WTC11 (cell line): ENCODE measurements at regions of chr17 and their contacts with region 1.

Region 1: DNA sequence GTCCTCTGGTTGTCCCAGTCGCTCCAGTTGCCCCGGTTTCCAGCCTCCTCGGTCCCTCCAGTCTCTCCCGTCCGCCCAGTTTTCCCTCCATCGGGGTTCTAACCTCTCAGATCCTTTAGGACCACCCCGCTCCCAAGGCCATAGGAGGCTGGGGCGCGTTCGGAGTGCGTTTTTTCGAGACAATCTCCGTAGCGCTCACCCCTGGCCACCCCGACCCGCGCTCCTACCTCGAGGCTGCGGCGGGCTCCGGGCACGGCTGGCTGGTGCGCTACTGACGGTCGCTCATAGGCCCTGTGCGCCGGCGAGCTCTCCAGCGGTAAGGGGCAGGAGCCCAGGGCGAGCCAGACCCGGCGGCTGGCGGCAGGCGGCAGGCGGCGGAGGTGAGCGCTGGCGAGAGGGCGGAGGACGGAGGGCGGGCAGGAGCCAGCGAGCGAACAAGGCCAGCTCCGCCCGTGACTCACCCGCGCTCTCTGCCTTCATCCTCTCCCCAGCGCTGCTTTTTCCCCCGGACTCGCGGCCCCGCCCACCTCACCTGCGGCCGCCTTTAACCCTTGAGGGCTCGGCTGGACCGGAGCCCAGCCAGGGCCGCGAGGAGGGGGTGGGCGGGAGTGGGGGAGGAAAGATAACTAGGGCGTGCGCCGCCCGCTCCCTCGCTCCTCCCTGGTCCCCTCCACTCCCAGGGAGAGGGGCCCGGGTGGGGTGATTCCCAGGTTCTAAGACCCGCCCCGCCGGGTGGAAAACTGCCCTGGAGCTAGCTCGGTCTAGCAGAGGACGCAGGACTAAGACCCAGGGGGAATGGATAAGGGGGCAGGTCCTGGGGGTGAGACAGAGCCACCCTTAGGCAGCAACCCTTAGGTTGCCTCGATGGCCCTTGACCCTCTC is at the start of gene SP6:
- DNase-seq: peak; percentile 90
- ATAC-seq: peak; percentile 67
- H3K4me3 Mint-ChIP-seq: peak within 1 kb of the TSS; percentile 78
- H3K27ac Mint-ChIP-seq: no peak within 1 kb of the TSS
- H3K4me1 Mint-ChIP-seq: peaks cover 46% of the 10 kb centered on the region
- H3K27me3 Mint-ChIP-seq: peaks cover 92% of the 10 kb centered on the region
- CTCF ChIP-seq: no peak
- total RNA-seq, gene SP6: 2.0 to 3.3 TPM (median 2.3 TPM) in 3 replicates

Region 2: DNA sequence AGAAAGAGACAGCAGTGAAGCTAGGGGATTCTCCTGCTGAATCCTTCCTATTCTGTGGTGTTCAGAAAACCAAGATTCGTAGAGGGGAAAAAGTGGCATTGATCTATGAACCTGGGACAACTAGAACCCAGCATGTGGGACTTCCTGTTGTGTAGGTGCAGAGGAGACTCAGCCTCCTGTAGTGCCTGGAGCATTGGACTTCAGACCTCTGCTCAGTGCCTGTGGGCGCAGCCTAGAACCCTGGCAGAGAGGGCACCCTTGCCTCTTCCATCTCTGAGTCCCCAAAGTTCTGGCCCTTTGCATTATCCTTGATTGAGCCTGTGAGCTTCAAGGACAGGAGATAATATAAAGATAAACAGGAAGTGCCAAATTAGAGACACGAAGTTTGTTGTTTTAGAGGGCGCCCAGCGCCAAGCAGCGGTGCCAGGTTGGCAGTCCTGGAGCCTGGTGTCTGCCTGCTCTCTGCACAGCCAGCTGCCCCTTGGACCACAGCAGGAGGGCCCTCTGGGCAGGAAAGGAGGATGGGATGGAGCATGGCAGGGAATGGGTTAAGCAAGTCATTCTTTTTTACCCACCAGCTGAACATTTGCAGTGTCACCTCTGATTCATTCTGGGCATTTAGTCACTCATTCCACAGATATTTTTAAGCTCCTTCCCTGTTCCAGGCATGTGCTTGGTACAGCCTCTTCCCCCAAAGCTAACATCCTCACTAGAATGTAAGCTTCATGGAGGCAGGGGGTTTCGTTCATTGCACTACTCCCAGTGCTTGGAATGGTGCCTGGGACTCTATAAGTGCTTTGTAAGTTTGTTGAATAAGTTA is 11.9 kb after region 1 on chr17:
- CTCF ChIA-PET with region 1: interaction called, 94 read pairs
- POLR2A ChIA-PET with region 1: no interaction called
- DNase-seq: no peak
- ATAC-seq: no peak
- H3K4me3 Mint-ChIP-seq: no peak overlapping the region
- H3K27ac Mint-ChIP-seq: no peak overlapping the region
- H3K4me1 Mint-ChIP-seq: peaks cover 12% of the 10 kb centered on the region
- H3K27me3 Mint-ChIP-seq: peaks cover 53% of the 10 kb centered on the region
- CTCF ChIP-seq: no peak

Region 3: DNA sequence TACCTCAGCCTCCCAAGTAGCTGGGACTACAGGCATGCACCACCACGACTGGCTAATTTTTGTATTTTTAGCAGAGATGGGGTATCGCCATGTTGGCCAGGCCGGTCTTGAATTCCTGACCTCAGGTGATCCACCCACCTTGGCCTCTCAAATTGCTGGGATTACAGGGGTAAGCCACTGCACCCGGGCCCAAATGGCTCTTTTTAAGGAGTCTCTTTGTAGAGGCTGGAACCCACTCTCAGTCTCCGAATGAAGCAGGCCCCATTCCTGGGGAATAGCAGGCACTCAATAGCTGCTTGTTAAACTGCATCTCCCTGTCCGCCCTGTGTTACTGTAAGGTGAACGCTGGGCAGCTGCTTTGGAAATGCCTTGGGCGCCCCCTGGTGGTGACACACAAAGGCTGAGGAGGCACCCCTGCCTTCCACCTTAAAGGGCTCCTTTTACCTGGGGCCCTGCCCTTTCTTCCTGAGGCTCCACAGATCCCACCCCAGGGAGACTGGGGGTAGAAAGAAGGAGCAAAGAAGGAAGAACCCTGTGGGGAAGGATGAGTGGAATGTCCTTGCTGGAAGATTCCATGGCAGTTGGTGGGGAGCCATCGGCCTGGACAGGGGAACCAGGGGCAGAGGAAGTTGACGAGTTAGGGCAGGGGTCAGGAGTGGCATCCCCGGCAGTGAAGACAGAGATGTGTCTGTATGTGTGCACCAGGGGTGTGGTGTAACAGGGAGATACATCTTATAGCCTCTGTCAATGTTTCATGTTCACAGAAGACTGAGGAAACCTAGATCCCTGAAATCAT is 39.0 kb after region 1 on chr17:
- CTCF ChIA-PET with region 1: interaction called, 1,122 read pairs
- POLR2A ChIA-PET with region 1: interaction called, 15 read pairs
- DNase-seq: peak; percentile 96
- ATAC-seq: peak; percentile 96
- H3K4me3 Mint-ChIP-seq: no peak overlapping the region
- H3K27ac Mint-ChIP-seq: no peak overlapping the region
- H3K4me1 Mint-ChIP-seq: peaks cover 27% of the 10 kb centered on the region
- H3K27me3 Mint-ChIP-seq: no peaks in the 10 kb centered on the region; the same call in 1 of the 2 replicates
- CTCF ChIP-seq: peak; percentile 94

Region 4: DNA sequence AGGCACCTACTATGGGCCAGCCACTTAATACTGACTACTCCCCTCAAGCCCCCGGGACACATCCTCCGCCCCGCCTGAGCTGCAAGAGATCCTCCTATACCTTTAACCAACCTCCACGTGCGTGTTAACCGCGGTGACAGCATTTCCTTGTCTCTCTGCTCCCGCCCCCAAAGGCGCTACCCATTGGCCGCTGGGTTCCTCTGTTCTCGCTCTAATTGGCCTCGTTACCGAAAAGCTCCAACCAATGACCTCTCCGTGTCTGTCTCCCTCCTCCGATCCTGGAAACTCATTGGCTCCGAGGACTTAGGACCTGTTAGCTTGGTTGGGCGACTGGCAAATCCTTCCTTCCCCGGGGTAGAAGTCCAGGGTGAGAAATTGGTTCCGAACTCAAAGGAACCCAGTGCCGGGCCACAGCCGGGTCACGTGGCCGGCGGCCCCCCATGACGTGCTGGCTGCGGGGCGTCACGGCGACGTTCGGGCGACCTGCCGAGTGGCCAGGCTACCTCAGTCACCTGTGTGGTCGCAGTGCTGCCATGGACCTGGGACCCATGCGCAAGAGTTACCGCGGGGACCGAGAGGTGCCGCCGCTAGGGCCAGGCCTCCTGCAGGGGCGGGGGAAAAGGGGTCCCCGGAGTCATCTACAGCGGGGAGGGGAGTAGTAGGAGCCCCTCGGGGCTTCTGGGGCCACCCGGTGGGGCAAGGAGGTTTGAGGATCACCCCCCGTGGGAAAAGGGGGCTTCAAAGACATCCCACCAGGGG is 90.5 kb after region 1 on chr17 and contains the start of gene PNPO:
- CTCF ChIA-PET with region 1: interaction called, 42 read pairs
- POLR2A ChIA-PET with region 1: no interaction called
- DNase-seq: peak; percentile 90
- ATAC-seq: peak; percentile 99
- H3K4me3 Mint-ChIP-seq: peak within 1 kb of the TSS; percentile 80
- H3K27ac Mint-ChIP-seq: no peak within 1 kb of the TSS
- H3K4me1 Mint-ChIP-seq: peaks cover 14% of the 10 kb centered on the region
- H3K27me3 Mint-ChIP-seq: peaks cover 30% of the 10 kb centered on the region
- CTCF ChIP-seq: no peak
- total RNA-seq, gene PNPO: 12.2 to 17.8 TPM (median 17.2 TPM) in 3 replicates

Region 5: GRCh38 chr17:47970704-47971463 is 120.0 kb after region 1 on chr17 and contains the start of gene CDK5RAP3:
- CTCF ChIA-PET with region 1: interaction called, 43 read pairs
- POLR2A ChIA-PET with region 1: interaction called, 3 read pairs
- DNase-seq: peak; percentile 100
- ATAC-seq: peak; percentile 98
- H3K4me3 Mint-ChIP-seq: peak within 1 kb of the TSS; percentile 82
- H3K27ac Mint-ChIP-seq: peak within 1 kb of the TSS; percentile 94
- H3K4me1 Mint-ChIP-seq: peaks cover 14% of the 10 kb centered on the region
- H3K27me3 Mint-ChIP-seq: peaks cover 16% of the 10 kb centered on the region
- CTCF ChIP-seq: peak; percentile 74
- total RNA-seq, gene CDK5RAP3: 128 to 143 TPM (median 138 TPM) in 3 replicates

Region 6: GRCh38 chr17:48101012-48101720 is 250.2 kb after region 1 on chr17 and contains the start of gene CBX1:
- CTCF ChIA-PET with region 1: no interaction called
- POLR2A ChIA-PET with region 1: no interaction called
- DNase-seq: peak; percentile 97
- ATAC-seq: peak; percentile 90
- H3K4me3 Mint-ChIP-seq: peak within 1 kb of the TSS; percentile 87
- H3K27ac Mint-ChIP-seq: peak within 1 kb of the TSS; percentile 97
- H3K4me1 Mint-ChIP-seq: peaks cover 11% of the 10 kb centered on the region
- H3K27me3 Mint-ChIP-seq: peaks cover 5% of the 10 kb centered on the region; the same call in 1 of the 2 replicates
- CTCF ChIP-seq: no peak
- total RNA-seq, gene CBX1: 162 to 167 TPM (median 165 TPM) in 3 replicates